CD8-positive, alpha-beta T cell (primary cell): ENCODE measurements at regions of chr7 and their contacts with region 1.

Region 1: DNA sequence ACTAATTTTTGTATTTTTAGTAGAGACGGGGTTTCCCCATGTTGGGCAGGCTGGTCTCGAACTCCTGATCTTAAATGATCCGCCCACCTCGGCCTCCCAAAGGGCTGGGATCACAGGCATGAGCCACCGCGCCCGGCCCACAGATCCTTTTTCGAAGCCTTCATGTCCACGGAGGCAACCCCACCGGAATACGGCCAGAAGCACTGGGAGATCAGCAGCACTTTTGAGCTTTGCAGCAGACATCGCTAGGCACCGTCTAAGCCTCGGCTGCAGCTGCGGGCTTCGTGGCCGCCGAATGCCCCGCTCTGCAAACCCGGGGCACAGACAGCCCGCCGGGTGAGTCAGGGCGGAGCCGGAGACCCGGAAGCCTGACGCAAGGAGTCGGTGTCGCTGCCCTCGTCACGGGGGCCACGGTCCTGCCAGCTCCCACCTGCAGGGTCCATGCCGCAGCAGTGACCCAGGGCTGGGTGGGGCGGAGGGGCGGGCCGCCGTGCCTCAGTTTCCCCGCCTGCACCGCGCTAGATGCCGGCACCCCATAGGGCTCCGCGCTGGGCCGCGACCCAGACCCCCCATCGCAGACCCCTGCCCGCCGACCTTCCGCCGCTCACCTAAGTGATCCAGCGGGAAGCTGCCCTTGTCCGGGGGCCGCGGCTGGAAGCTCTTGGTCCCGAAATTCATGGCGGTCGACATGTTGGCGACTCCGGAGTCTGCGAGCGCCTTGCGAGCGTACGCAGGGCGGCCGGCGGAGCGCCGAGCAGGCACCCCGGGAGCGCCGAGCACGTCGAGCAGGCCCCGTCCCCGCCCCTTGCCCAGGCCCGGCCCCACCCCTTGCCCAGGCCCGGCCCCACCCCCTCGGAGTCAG is at the start of gene COX19:
- DNase-seq: peak; percentile 83 to 95 (median 90)
- ATAC-seq: peak; percentile 87
- H3K4me3 ChIP-seq: peak within 1 kb of the TSS; percentile 95 to 100
- H3K4me3 Mint-ChIP-seq: peak within 1 kb of the TSS; percentile 89
- H3K27ac ChIP-seq: peak within 1 kb of the TSS; percentile 98 to 99
- H3K27ac Mint-ChIP-seq: peak within 1 kb of the TSS; percentile 95
- H3K4me1 ChIP-seq: peaks cover 28% of the 10 kb centered on the region
- H3K4me1 Mint-ChIP-seq: peaks cover 31% of the 10 kb centered on the region
- H3K27me3 ChIP-seq: no peaks in the 10 kb centered on the region
- H3K27me3 Mint-ChIP-seq: no peaks in the 10 kb centered on the region
- CTCF ChIP-seq: no peak
- total RNA-seq, gene COX19: 40.3 to 42.4 TPM

Region 2: DNA sequence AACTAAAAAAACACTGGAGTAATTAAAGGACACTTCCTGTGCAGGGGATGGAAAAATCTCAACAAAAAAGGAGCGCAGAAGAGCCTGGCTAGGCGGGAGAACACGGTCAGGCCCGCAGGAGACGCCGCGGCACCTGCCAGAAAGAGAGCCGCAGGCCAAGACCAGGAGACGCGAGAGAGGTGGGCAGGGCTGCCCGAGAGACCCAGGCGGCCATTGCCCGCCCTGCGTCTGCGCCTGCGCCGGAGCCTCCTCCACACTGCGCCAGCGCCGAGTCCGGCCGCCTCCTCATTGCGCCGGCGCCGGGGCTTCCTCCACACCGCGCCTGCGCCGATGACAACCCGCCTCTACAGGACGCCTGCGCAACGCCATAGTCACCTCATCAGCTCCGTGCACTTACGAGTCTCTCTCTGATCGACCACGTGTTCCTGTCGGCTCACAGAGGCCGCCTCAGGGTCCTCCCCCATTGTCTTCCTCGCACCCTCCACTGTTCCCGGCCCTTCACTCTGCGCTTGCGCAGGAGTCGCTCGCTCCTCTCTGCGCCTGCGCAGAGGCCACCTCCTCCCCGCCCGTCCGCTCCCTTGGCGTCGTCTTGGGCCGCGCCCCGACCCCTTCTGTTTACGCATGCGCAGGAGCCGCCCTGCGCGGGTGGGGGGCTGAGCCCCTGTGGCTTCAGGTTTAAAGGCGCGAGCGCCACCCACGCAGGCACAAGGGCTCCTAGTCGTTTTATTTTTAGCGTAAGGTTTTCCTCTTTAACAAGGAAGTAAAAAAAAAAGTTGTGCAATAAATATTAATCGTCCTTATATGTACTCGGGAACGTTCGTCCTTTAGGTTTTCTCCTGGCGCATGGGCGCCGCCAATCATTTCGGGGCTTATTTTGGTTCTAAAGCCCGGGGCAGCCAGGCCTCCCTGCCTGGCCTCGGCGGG is 825.9 kb before region 1 on chr7:
- CTCF ChIA-PET with region 1: no interaction called
- POLR2A ChIA-PET with region 1: no interaction called
- intact Hi-C with region 1: loop called in 1 of 2 experiments (anchors 5 kb)
- DNase-seq: peak; percentile 95 to 100 (median 98)
- ATAC-seq: peak; percentile 98
- H3K4me3 ChIP-seq: peak overlapping the region; percentile 54 to 57
- H3K4me3 Mint-ChIP-seq: peak overlapping the region; percentile 85
- H3K27ac ChIP-seq: peak overlapping the region; percentile 76 to 86
- H3K27ac Mint-ChIP-seq: peak overlapping the region; percentile 96
- H3K4me1 ChIP-seq: peaks cover 12% of the 10 kb centered on the region
- H3K4me1 Mint-ChIP-seq: peaks cover 18% of the 10 kb centered on the region
- H3K27me3 ChIP-seq: no peaks in the 10 kb centered on the region
- H3K27me3 Mint-ChIP-seq: no peaks in the 10 kb centered on the region
- CTCF ChIP-seq: no peak

Region 3: DNA sequence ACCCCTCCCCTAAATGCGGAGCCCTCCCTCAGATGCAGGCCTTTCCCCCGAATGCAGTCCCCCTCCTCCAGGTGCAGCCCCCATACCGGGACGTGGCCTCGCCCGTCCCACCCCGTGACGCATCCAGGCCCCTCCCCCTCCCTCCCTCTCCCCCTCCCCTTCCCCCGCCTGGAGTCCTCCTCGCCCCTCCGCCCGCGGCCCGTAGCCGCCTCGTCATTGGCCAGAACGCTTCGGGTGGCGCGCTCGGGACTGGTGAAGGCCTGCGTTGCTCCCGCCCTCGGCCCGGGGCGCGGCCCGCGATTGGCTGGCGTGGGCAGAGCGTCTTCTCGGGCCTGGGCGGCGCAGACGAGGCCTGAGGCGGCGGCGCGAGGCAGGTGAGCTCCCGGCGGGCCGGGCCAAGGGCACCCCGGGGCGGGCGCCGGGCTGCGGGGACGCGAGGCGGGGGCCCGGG is 158.7 kb before region 1 on chr7:
- CTCF ChIA-PET with region 1: no interaction called
- POLR2A ChIA-PET with region 1: no interaction called
- intact Hi-C with region 1: loop called in 1 of 2 experiments (anchors 5 kb)
- DNase-seq: peak; percentile 93 to 98 (median 96)
- ATAC-seq: peak; percentile 94
- H3K4me3 ChIP-seq: peak overlapping the region; percentile 40 to 53
- H3K4me3 Mint-ChIP-seq: peak overlapping the region; percentile 61
- H3K27ac ChIP-seq: no peak overlapping the region
- H3K27ac Mint-ChIP-seq: no peak overlapping the region
- H3K4me1 ChIP-seq: peaks cover 34% of the 10 kb centered on the region
- H3K4me1 Mint-ChIP-seq: peaks cover 54% of the 10 kb centered on the region
- H3K27me3 ChIP-seq: no peaks in the 10 kb centered on the region
- H3K27me3 Mint-ChIP-seq: peaks cover 2% of the 10 kb centered on the region
- CTCF ChIP-seq: no peak

Region 4: GRCh38 chr7:923108-924041 is 51.7 kb before region 1 on chr7:
- CTCF ChIA-PET with region 1: interaction called, 4 read pairs
- POLR2A ChIA-PET with region 1: interaction called, 30 read pairs
- intact Hi-C with region 1: loop called in 1 of 2 experiments (anchors 1 kb)
- DNase-seq: peak; percentile 82 to 97 (median 95)
- ATAC-seq: peak; percentile 72
- H3K4me3 ChIP-seq: peak overlapping the region; percentile 72 to 94
- H3K4me3 Mint-ChIP-seq: peak overlapping the region; percentile 86
- H3K27ac ChIP-seq: peak overlapping the region; percentile 83 to 87
- H3K27ac Mint-ChIP-seq: peak overlapping the region; percentile 95
- H3K4me1 ChIP-seq: peaks cover 50% of the 10 kb centered on the region
- H3K4me1 Mint-ChIP-seq: peaks cover 34% of the 10 kb centered on the region
- H3K27me3 ChIP-seq: no peaks in the 10 kb centered on the region
- H3K27me3 Mint-ChIP-seq: no peaks in the 10 kb centered on the region
- CTCF ChIP-seq: no peak

Region 5: GRCh38 chr7:1028031-1028770 is 53.1 kb after region 1 on chr7:
- CTCF ChIA-PET with region 1: no interaction called
- POLR2A ChIA-PET with region 1: no interaction called
- intact Hi-C with region 1: loop called in 1 of 2 experiments (anchors 1 kb)
- DNase-seq: peak; percentile 67 to 90 (median 76)
- ATAC-seq: peak; percentile 72
- H3K4me3 ChIP-seq: peak overlapping the region; percentile 36 to 57
- H3K4me3 Mint-ChIP-seq: peak overlapping the region; percentile 82
- H3K27ac ChIP-seq: peak overlapping the region; percentile 48 to 81
- H3K27ac Mint-ChIP-seq: no peak overlapping the region
- H3K4me1 ChIP-seq: peaks cover 33% of the 10 kb centered on the region
- H3K4me1 Mint-ChIP-seq: peaks cover 34% of the 10 kb centered on the region
- H3K27me3 ChIP-seq: no peaks in the 10 kb centered on the region
- H3K27me3 Mint-ChIP-seq: no peaks in the 10 kb centered on the region
- CTCF ChIP-seq: no peak

Region 6: DNA sequence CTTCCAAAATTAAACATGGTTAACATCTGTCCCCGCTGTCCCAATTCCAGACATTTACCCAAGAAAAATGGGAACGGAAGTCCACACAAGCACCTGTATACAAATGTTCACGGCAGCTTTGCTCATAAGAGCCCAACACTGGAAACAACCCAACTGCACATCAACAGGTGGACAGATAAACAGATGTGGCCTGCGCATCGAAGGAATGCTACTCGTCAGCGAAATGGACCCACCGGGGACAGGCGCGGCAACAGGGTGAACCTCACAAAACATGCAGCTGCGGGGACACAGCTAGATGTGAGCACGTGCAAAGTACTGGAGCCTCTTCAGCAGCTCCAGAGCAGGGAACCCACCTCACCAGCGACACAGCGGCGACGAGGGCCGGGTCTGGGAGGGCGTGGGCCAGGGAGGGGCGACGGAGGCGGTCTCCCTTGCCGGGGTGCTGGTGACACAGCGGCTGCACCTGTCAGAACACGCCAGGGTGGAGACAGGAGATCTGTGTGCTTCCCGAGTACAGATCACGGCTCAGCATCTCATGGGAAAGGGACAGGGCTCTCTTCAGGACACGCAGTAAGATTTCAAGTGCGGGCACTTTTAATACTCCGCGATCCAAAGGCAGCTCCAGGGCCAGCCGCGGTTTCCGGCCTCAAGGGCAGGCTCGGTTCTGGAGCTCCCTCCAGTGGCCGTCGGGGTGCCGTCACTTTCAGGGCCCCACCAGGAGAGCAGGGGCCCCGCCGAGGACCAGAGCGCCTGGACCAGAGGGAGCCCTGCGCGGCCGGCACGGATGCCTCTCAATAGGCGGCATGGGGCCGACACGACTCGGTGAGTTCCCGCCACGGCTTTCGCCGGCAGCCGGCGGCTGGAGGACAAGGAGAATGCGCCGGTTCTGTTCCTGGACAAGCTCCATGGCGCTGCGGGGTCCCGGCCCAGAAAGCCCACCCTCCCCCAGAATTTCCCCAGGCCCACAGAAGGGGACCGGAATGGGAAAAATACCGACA is 90.5 kb after region 1 on chr7:
- CTCF ChIA-PET with region 1: interaction called, 12 read pairs
- POLR2A ChIA-PET with region 1: interaction called, 5 read pairs
- intact Hi-C with region 1: no loop called
- DNase-seq: peak; percentile 69 to 91 (median 83)
- ATAC-seq: peak; percentile 97
- H3K4me3 ChIP-seq: peak overlapping the region; percentile 37 to 42
- H3K4me3 Mint-ChIP-seq: peak overlapping the region; percentile 72
- H3K27ac ChIP-seq: no peak overlapping the region
- H3K27ac Mint-ChIP-seq: no peak overlapping the region
- H3K4me1 ChIP-seq: peaks cover 5% of the 10 kb centered on the region
- H3K4me1 Mint-ChIP-seq: peaks cover 9% of the 10 kb centered on the region
- H3K27me3 ChIP-seq: peaks cover 0 to 4% of the 10 kb centered on the region in 2 experiments
- H3K27me3 Mint-ChIP-seq: no peaks in the 10 kb centered on the region
- CTCF ChIP-seq: peak; percentile 86

Region 7: DNA sequence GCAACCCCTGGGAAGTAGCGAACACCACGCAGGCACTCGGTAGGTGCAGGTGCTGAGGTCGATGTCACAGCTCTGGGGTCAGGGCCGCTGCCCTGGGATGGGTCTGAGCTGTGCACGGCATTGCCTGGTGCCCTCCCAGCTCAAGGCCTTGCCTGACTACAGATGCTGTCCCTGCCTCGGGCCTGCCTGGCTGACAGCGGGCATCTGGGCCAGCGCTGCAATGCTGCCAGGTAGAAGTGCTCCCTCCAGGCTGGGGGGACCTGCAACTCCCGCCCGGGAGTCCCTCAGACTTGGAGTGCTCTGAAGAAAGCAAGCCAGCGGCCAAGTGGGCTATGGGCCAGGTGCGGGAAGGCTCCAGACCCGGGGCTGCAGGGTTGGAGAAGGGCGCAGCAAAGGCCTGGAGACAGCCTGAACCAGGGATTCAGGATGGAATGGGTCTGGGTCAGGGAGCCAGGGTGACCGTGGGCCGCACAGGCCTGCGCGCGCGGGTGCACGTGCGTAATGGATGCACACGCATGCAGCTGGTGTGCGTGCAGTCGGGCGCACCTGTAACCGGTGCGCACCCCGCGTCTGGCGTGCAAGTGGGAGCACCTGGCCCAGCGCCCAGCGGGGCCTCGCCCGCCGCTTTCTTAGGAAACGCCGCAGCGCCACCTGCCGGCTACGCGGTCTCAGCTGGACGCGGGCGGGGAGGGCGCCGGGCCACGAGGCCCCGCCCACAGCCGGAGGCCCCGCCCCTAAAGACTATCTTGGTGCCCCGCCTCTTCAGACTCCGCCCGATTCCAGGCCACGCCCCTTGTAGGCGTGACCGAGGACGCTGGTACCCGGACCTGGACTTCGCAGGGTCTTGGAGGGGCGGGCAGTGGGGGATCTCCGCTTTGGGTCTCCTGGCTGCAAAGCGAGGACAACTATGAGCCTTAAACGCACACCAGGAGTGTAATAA is 437.5 kb after region 1 on chr7:
- CTCF ChIA-PET with region 1: no interaction called
- POLR2A ChIA-PET with region 1: no interaction called
- intact Hi-C with region 1: loop called in 1 of 2 experiments (anchors 5 kb)
- DNase-seq: peak; percentile 80 to 97 (median 89)
- ATAC-seq: peak; percentile 91
- H3K4me3 ChIP-seq: peak overlapping the region; percentile 23 to 30
- H3K4me3 Mint-ChIP-seq: peak overlapping the region; percentile 61
- H3K27ac ChIP-seq: peak overlapping the region in 1 of 2 experiments; percentile 22
- H3K27ac Mint-ChIP-seq: no peak overlapping the region
- H3K4me1 ChIP-seq: peaks cover 24% of the 10 kb centered on the region
- H3K4me1 Mint-ChIP-seq: peaks cover 13% of the 10 kb centered on the region
- H3K27me3 ChIP-seq: peaks cover 0 to 3% of the 10 kb centered on the region in 2 experiments
- H3K27me3 Mint-ChIP-seq: peaks cover 6% of the 10 kb centered on the region
- CTCF ChIP-seq: peak; percentile 81

Region 8: DNA sequence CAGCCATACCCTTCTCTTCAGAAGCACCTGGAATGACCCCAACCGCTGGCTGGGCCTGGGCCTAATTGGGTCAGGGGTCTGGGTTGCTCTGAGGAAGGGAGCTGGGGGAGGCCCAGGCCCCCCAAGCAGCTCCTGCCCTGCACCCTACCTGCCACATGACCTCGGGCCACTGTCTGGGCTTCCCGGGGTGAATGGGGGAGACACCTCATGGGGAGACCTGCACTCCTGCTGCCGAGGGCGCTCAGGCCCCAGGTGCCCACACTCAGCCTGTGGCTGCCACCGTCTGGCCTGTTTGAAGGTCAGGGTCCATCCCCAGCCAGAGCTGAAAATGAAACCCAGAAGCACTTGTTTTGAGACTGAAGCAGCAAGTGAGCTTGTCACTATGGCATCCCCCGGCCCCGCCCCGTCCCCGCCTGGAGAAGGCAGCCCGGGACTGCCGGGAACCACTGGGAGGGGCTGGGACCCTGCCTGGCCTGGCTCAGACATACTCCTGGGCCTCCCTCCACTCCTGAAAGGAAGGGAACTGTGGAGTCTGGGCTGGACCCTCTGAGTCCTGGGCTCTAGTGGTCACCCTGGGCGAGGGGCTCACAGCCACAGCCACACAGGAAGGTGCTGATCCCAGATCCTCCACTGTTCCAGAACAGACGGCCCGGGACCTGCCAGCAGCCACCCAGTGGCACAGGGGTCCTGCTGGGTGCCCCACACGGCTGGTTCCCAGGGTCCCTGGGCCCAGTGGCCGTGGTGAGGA is 491.6 kb after region 1 on chr7:
- CTCF ChIA-PET with region 1: no interaction called
- POLR2A ChIA-PET with region 1: no interaction called
- intact Hi-C with region 1: no loop called
- DNase-seq: no peak
- ATAC-seq: no peak
- H3K4me3 ChIP-seq: no peak overlapping the region
- H3K4me3 Mint-ChIP-seq: no peak overlapping the region
- H3K27ac ChIP-seq: no peak overlapping the region
- H3K27ac Mint-ChIP-seq: no peak overlapping the region
- H3K4me1 ChIP-seq: no peaks in the 10 kb centered on the region
- H3K4me1 Mint-ChIP-seq: peaks cover 7% of the 10 kb centered on the region
- H3K27me3 ChIP-seq: no peaks in the 10 kb centered on the region
- H3K27me3 Mint-ChIP-seq: no peaks in the 10 kb centered on the region
- CTCF ChIP-seq: no peak